Activated naive CD4-positive, alpha-beta T cell treated with anti-CD3 and anti-CD28 coated beads for 36 hours (primary cell): ENCODE measurements at regions of chr5 and their contacts with region 1.

Region 1: DNA sequence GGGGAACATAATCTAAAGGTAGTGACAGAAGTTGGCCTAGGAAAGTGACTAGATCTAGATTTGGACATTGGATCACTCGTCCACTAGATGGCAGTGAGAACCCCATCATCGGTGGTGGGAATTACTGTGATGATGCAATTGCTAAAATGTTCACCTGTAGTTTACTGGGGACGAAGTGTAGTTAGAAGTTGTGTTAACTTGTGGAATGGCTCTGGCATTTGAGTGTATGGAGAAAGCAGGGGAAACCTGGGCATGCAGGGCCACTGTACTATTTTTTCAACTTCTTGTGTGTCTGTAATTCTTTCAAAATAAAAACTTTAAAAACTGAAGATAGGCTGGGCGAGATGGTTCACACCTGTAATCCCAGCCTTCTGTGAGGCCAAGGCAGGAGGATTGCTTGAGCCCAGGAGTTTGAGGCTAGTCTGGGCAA is 75.5 kb downstream of the PHAX start:
- DNase-seq: peak; percentile 85
- H3K4me3 Mint-ChIP-seq: no peak overlapping the region
- H3K27ac Mint-ChIP-seq: peak overlapping the region; percentile 67
- H3K4me1 Mint-ChIP-seq: peaks cover 4% of the 10 kb centered on the region
- H3K27me3 Mint-ChIP-seq: no peaks in the 10 kb centered on the region

Region 2: DNA sequence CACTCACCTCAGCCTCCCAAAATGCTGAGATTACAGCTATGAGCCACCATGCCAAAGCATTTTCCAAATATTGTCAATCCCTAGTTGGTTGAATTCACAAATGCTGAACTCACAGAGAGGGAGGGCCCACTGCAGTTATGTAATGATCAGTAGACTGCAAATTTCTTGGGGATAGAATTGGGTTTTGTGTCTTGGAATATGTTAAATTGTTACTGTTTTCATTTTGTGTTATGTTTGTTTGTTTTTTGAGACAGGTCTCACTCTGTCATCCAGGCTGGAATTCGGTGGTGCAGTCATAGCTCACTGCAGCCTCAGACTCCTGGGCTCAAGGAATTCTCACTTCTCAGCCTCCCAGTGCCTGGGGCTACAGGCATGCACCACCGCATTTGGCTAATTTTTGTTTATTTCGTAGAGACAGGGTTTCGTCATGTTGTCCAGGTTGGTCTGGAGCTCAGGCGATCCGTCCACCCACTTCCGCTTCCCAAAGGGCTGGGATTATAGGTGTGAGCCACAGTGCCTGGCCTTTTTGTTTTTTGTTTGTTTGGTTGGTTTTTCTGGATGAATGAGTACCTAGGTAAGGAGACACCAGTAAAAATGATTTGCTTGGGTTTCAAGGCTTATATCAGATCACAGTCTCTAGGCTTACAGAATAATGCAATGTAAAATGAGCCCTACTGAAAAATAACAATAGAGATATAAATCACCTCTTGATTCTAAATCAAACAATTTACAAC is 69.2 kb after region 1 on chr5:
- CTCF ChIA-PET with region 1: interaction called, 3 read pairs
- intact Hi-C with region 1: loop called (anchors 2 kb)
- DNase-seq: no peak
- H3K4me3 Mint-ChIP-seq: no peak overlapping the region
- H3K27ac Mint-ChIP-seq: peak overlapping the region; percentile 24
- H3K4me1 Mint-ChIP-seq: peaks cover 41% of the 10 kb centered on the region
- H3K27me3 Mint-ChIP-seq: no peaks in the 10 kb centered on the region

Region 3: DNA sequence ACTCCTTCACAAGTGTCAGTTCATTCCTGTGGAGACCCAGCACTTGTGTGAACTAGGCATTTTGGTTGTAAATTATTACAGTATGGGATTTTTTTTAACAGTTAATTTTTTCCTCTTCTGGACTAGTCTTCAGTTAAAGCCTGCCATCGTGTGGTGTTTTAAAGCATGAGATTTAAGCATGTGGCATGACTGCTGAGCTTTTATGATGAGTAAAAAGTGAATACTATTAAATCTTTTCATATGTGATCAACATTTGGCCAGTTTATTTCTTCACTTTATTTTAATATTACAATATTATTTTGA is 125.7 kb after region 1 on chr5:
- CTCF ChIA-PET with region 1: interaction called, 8 read pairs
- intact Hi-C with region 1: loop called (anchors 1 kb)
- DNase-seq: peak; percentile 19
- H3K4me3 Mint-ChIP-seq: no peak overlapping the region
- H3K27ac Mint-ChIP-seq: no peak overlapping the region
- H3K4me1 Mint-ChIP-seq: peaks cover 51% of the 10 kb centered on the region
- H3K27me3 Mint-ChIP-seq: no peaks in the 10 kb centered on the region

Region 4: GRCh38 chr5:127042593-127042992 is 366.4 kb after region 1 on chr5:
- CTCF ChIA-PET with region 1: no interaction called
- intact Hi-C with region 1: loop called (anchors 1 kb)
- DNase-seq: no peak
- H3K4me3 Mint-ChIP-seq: no peak overlapping the region
- H3K27ac Mint-ChIP-seq: no peak overlapping the region
- H3K4me1 Mint-ChIP-seq: no peaks in the 10 kb centered on the region
- H3K27me3 Mint-ChIP-seq: no peaks in the 10 kb centered on the region

Region 5: GRCh38 chr5:127492854-127493738 is 816.9 kb after region 1 on chr5:
- CTCF ChIA-PET with region 1: no interaction called
- intact Hi-C with region 1: loop called (anchors 5 kb)
- DNase-seq: no peak
- H3K4me3 Mint-ChIP-seq: no peak overlapping the region
- H3K27ac Mint-ChIP-seq: no peak overlapping the region
- H3K4me1 Mint-ChIP-seq: no peaks in the 10 kb centered on the region
- H3K27me3 Mint-ChIP-seq: peaks cover 3% of the 10 kb centered on the region